Activated B cell treated with CpG ODN at 0.5 μM for 24 hours (primary cell): ENCODE measurements at regions of chr5 and their contacts with region 1.

Region 1: DNA sequence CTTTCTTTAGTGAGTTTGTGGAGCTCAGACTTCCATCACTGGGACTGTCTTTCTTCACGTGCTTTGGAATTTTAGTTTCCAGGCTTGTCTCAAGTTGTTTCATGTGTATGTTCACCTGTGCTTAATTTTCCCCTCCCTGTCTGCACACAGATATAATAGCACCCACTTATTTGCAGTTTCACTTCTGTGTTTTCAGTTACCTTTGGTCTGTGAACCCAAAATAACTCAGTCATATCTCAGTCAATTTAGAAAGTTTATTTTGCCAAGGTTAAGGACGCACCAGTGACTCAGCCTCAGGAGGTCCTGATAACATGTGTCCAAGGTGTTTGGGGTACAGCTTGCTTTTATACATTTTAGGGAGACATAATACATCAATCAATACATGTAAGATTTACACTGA is 330.4 kb downstream of the ICE1 start:
- DNase-seq: no peak
- ATAC-seq: peak; percentile 56
- H3K4me3 Mint-ChIP-seq: peak overlapping the region; percentile 42
- H3K27ac Mint-ChIP-seq: peak overlapping the region; percentile 88
- H3K4me1 Mint-ChIP-seq: peaks cover 80% of the 10 kb centered on the region
- H3K27me3 Mint-ChIP-seq: no peaks in the 10 kb centered on the region
- CTCF ChIP-seq: no peak

Region 2: GRCh38 chr5:5570646-5571045 is 182.2 kb before region 1 on chr5:
- CTCF ChIA-PET with region 1: no interaction called
- POLR2A ChIA-PET with region 1: no interaction called
- intact Hi-C with region 1: no loop called
- DNase-seq: no peak
- ATAC-seq: no peak
- H3K4me3 Mint-ChIP-seq: no peak overlapping the region
- H3K27ac Mint-ChIP-seq: no peak overlapping the region
- H3K4me1 Mint-ChIP-seq: no peaks in the 10 kb centered on the region
- H3K27me3 Mint-ChIP-seq: peaks cover 6% of the 10 kb centered on the region
- CTCF ChIP-seq: no peak

Region 3: DNA sequence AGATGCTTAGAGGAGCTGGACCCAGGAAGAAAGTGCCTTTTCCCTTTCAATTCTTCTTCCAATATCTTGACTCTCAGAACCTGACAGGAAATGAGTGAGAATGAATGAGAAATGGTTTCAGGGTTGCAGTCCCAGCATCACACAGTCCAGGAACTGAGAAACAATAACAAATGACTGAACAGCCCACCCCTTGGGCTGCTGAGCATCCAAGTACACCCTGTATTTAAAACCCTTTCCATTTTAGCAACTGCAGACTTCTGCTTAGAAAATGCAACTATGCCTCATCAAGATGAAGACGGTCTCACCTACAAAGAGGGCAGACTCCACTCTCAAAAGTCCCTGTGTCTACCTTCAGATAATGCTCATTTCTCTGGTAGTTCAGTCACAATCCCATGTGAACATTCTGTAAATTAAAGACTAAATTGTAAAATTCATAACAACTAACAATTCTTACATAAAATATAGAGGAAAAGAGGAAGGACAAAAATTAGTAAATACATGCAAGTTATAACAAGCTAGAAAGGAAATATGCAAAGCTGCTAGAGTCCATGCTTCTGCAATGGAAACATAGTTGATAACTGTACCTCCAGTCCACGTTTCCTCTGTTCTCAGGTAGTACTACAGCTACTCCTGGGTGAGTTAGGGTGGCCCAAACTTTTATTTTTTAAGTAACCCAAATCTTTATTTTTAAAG is 13.9 kb before region 1 on chr5:
- CTCF ChIA-PET with region 1: no interaction called
- POLR2A ChIA-PET with region 1: no interaction called
- intact Hi-C with region 1: loop called (anchors 1 kb)
- DNase-seq: no peak
- ATAC-seq: peak; percentile 80
- H3K4me3 Mint-ChIP-seq: peak overlapping the region; percentile 25
- H3K27ac Mint-ChIP-seq: peak overlapping the region; percentile 66
- H3K4me1 Mint-ChIP-seq: peaks cover 49% of the 10 kb centered on the region
- H3K27me3 Mint-ChIP-seq: no peaks in the 10 kb centered on the region
- CTCF ChIP-seq: no peak